Panc1 (cell line): ENCODE measurements at regions of chr10 and their contacts with region 1.

Region 1: GRCh38 chr10:75640803-75641202 is 209.4 kb downstream of the LRMDA start:
- DNase-seq: no peak
- ATAC-seq: no peak
- H3K4me3 ChIP-seq: no peak overlapping the region
- H3K27ac ChIP-seq: no peak overlapping the region
- H3K4me1 ChIP-seq: no peaks in the 10 kb centered on the region
- H3K27me3 ChIP-seq: peaks cover 20% of the 10 kb centered on the region
- CTCF ChIP-seq: no peak

Region 2: GRCh38 chr10:75476569-75476968 is 164.2 kb before region 1 on chr10:
- CTCF ChIA-PET with region 1: no interaction called
- POLR2A ChIA-PET with region 1: interaction called, 10 read pairs
- in situ Hi-C with region 1: no loop called
- intact Hi-C with region 1: no loop called
- DNase-seq: no peak
- ATAC-seq: no peak
- H3K4me3 ChIP-seq: no peak overlapping the region
- H3K27ac ChIP-seq: no peak overlapping the region
- H3K4me1 ChIP-seq: no peaks in the 10 kb centered on the region
- H3K27me3 ChIP-seq: peaks cover 4% of the 10 kb centered on the region; the same call in 1 of the 2 replicates
- CTCF ChIP-seq: no peak

Region 3: GRCh38 chr10:75623310-75624093 is 17.3 kb before region 1 on chr10:
- CTCF ChIA-PET with region 1: no interaction called
- POLR2A ChIA-PET with region 1: no interaction called
- in situ Hi-C with region 1: no loop called
- intact Hi-C with region 1: no loop called
- DNase-seq: no peak
- ATAC-seq: no peak
- H3K4me3 ChIP-seq: no peak overlapping the region
- H3K27ac ChIP-seq: no peak overlapping the region
- H3K4me1 ChIP-seq: no peaks in the 10 kb centered on the region
- H3K27me3 ChIP-seq: peaks cover 14% of the 10 kb centered on the region; the same call in 1 of the 2 replicates
- CTCF ChIP-seq: no peak